ENCODE measurements at regions of chr7 and their contacts with region 1.

Region 1: DNA sequence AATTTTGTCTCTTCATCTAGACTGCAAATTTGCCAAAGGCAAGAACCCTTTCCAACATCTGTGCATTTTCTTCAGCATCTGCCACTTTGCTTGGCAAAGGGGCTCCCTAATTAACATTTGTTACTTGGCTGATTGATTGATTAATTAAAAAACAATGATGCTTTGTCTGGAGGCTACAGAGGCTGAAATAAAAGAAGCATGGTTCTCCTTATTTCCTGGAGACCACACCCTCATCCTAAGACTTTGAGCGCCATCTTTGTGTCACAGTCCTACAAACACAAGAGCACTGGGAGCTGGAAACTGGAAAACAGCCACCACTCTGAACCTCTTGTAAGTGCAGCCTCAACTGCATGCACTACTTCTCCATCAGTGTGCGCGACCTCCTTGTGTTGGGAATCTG is 189.2 kb downstream of the C7orf25 start:
- DNase-seq: no peak
- H3K4me3 Mint-ChIP-seq: no peak overlapping the region
- H3K27ac Mint-ChIP-seq: no peak overlapping the region
- H3K4me1 Mint-ChIP-seq: no peaks in the 10 kb centered on the region
- H3K27me3 Mint-ChIP-seq: no peaks in the 10 kb centered on the region
- CTCF ChIP-seq: no peak

Region 2: DNA sequence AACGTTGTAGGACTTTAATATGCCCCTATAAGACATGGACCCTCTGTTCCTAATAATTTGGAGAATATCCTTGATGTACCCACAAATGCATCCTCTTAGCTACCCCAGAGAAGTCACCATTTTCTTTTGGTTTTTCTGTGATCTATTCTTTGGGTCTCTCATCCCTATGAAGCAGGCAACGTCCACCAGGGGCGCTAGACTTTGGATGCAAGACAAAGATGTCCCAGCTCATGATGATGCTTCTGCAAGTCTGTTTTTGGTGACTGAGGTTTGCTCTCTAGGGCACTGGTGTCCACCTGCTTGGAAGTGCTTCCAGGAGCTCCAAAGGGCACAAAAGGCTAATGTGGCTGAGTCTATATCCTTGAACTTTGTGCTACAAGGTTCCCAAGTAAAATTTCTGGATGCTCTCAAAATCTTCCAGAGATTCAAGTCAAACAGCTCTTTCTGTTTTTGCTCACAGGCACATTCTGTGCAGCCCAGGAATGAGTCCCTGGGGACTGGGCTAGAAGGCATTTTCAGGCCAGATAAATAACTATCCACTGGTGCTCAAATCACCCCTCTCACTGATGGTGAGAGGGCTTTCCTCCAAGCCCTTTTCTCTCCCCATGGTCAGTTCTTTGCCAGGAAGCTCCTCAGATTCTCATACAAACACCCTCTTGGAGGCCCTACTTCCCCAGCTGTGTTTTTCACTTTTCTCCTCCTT is 22.8 kb after region 1 on chr7:
- CTCF ChIA-PET with region 1: interaction called, 11 read pairs
- POLR2A ChIA-PET with region 1: no interaction called
- intact Hi-C with region 1: no loop called
- DNase-seq: peak; percentile 49
- H3K4me3 Mint-ChIP-seq: no peak overlapping the region
- H3K27ac Mint-ChIP-seq: no peak overlapping the region
- H3K4me1 Mint-ChIP-seq: no peaks in the 10 kb centered on the region
- H3K27me3 Mint-ChIP-seq: no peaks in the 10 kb centered on the region
- CTCF ChIP-seq: peak; percentile 43

Region 3: DNA sequence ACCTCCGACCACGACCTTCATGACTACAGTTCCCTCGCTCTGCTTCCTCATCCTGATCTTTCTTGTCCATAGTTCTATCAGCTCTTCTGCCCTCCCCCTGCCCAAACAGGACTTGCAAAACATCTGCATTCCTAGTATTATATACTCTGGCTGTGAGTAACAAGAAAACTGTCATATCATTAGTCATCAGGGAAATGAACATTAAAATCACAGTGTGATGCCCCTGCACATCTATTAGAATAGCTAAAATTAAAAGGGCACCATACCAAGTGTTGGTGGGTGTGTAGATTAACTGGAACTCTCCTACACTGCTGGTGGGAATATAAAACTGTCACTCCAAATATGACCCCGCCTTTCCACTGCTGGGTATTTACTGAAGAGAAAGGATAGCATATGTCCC is 47.4 kb after region 1 on chr7:
- CTCF ChIA-PET with region 1: no interaction called
- POLR2A ChIA-PET with region 1: no interaction called
- intact Hi-C with region 1: no loop called
- DNase-seq: peak; percentile 58
- H3K4me3 Mint-ChIP-seq: no peak overlapping the region
- H3K27ac Mint-ChIP-seq: no peak overlapping the region
- H3K4me1 Mint-ChIP-seq: peaks cover 11% of the 10 kb centered on the region
- H3K27me3 Mint-ChIP-seq: no peaks in the 10 kb centered on the region
- CTCF ChIP-seq: no peak

Region 4: GRCh38 chr7:42843205-42843800 is 120.6 kb after region 1 on chr7:
- CTCF ChIA-PET with region 1: no interaction called
- POLR2A ChIA-PET with region 1: no interaction called
- intact Hi-C with region 1: no loop called
- DNase-seq: no peak
- H3K4me3 Mint-ChIP-seq: no peak overlapping the region
- H3K27ac Mint-ChIP-seq: no peak overlapping the region
- H3K4me1 Mint-ChIP-seq: peaks cover 6% of the 10 kb centered on the region
- H3K27me3 Mint-ChIP-seq: no peaks in the 10 kb centered on the region
- CTCF ChIP-seq: no peak